A673 (cell line): ENCODE measurements at regions of chr7 and their contacts with region 1.

Region 1: DNA sequence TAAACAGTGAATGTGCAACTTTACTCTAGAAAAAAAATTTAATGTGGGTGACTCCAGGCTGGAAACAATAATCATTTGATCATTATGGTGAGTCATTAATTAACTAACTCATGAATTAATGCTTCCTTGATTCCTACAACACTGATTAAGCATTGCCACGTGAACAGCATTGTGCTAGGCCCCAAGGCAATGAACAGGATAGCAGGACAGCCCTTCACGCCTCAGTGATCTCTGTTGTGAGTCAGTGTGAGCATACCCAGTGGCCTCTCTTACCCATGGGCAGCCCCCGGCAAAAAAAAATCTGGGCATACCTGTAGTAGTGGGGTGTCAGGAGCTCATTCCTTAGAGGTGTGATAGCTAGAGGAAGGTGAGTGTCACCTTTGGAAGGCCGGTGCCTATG is 76.0 kb downstream of the DENND2A start:
- DNase-seq: no peak
- H3K4me3 ChIP-seq: no peak overlapping the region
- H3K27ac ChIP-seq: no peak overlapping the region
- H3K4me1 ChIP-seq: no peaks in the 10 kb centered on the region
- H3K27me3 ChIP-seq: no peaks in the 10 kb centered on the region
- CTCF ChIP-seq: no peak

Region 2: GRCh38 chr7:140364819-140365218 is 199.8 kb before region 1 on chr7:
- CTCF ChIA-PET with region 1: no interaction called
- POLR2A ChIA-PET with region 1: no interaction called
- intact Hi-C with region 1: no loop called
- DNase-seq: no peak
- H3K4me3 ChIP-seq: no peak overlapping the region
- H3K27ac ChIP-seq: no peak overlapping the region
- H3K4me1 ChIP-seq: no peaks in the 10 kb centered on the region
- H3K27me3 ChIP-seq: no peaks in the 10 kb centered on the region
- CTCF ChIP-seq: no peak

Region 3: DNA sequence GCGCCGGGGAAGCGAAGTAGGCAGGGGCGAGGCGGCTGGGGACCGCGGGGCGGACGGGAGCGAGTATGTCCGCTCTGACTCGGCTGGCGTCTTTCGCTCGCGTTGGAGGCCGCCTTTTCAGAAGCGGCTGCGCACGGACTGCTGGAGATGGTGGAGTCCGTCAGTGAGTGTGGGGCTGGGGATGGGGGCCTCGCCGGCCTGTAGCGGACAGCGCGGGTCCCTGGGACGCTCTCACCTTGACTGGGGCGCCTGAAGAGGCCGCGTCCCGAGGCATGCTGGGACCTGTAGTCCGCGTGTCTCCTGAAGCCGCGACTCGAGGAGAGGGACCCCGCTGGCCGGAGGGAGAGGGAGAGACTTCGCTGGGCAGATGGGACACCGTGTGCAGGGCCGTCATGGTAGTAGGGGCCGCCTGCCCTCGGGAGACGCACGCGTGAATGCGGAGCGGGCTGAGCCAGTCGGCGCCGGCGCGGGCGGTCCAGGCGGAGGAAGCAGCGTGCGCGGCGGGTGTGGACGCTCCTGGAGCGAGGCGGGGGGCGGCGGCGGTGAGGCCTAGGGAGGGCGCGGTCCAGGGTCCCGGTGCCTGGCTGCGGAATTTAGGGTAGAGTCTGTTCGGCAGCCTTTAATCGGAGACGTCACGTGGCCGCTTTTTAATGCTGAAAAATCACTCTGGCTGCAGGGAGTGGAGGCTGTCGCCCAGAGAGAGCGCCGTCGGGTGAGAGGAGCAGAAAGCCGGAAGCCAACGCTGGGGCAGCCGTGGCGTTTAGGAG is 132.2 kb after region 1 on chr7 and contains the start of gene NDUFB2:
- CTCF ChIA-PET with region 1: no interaction called
- POLR2A ChIA-PET with region 1: interaction called, 13 read pairs
- intact Hi-C with region 1: no loop called
- DNase-seq: peak; percentile 89
- H3K4me3 ChIP-seq: peak within 1 kb of the TSS; percentile 81
- H3K27ac ChIP-seq: peak within 1 kb of the TSS; percentile 89
- H3K4me1 ChIP-seq: peaks cover 15% of the 10 kb centered on the region
- H3K27me3 ChIP-seq: no peaks in the 10 kb centered on the region
- CTCF ChIP-seq: no peak
- total RNA-seq, gene NDUFB2: 180 and 192 TPM in 2 replicates